HEK293 (cell line): ENCODE measurements at regions of chr7 and their contacts with region 1.

Region 1: GRCh38 chr7:24572997-24573625 is at the start of gene PALS2:
- H3K4me3 ChIP-seq: peak within 1 kb of the TSS; percentile 76
- H3K27ac ChIP-seq: peak within 1 kb of the TSS; percentile 86
- H3K4me1 ChIP-seq: peaks cover 22% of the 10 kb centered on the region
- CTCF ChIP-seq: no peak

Region 2: DNA sequence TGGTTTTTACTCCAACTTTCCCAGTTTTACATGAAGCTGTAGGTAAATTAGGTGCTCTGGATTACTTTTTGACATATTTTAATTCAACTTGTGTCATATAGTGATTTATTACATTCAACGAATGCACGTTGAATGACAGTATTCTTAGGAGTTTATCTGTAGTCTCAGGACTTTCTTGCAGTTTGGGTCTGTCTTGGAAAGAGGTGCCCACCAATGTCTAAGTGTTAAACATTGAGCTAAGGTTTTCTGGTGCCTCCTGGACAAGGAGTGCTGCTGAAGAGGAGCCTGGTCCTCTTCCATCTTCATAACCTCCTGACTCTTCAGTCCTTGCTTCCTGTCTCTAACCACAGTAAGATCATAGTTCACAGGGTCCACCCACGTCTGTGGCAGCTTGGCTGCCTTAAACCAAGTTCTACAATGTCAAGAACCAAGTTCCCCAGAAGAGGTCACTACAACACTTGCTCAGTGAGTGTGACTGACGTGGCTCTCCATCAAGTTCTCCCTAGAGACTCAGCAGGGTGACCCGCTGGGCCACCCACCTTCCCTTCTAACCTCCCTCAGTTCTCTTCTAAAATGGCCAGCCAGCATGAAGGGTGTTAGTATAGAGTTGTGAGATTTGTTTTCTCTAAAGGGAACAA is 283.0 kb before region 1 on chr7:
- CTCF ChIA-PET with region 1: interaction called, 13 read pairs
- POLR2A ChIA-PET with region 1: no interaction called
- H3K4me3 ChIP-seq: no peak overlapping the region
- H3K27ac ChIP-seq: no peak overlapping the region
- H3K4me1 ChIP-seq: no peaks in the 10 kb centered on the region
- CTCF ChIP-seq: peak; percentile 56; the same call in 1 of the 2 replicates

Region 3: GRCh38 chr7:24665564-24666294 is 92.6 kb after region 1 on chr7:
- CTCF ChIA-PET with region 1: interaction called, 42 read pairs
- POLR2A ChIA-PET with region 1: no interaction called
- H3K4me3 ChIP-seq: no peak overlapping the region
- H3K27ac ChIP-seq: no peak overlapping the region
- H3K4me1 ChIP-seq: no peaks in the 10 kb centered on the region
- CTCF ChIP-seq: no peak

Region 4: GRCh38 chr7:24722386-24723177 is 149.5 kb after region 1 on chr7:
- CTCF ChIA-PET with region 1: interaction called, 11 read pairs
- POLR2A ChIA-PET with region 1: no interaction called
- H3K4me3 ChIP-seq: no peak overlapping the region
- H3K27ac ChIP-seq: no peak overlapping the region
- H3K4me1 ChIP-seq: no peaks in the 10 kb centered on the region
- CTCF ChIP-seq: no peak